A673 (cell line): ENCODE measurements at regions of chr6 and their contacts with region 1.

Region 1: DNA sequence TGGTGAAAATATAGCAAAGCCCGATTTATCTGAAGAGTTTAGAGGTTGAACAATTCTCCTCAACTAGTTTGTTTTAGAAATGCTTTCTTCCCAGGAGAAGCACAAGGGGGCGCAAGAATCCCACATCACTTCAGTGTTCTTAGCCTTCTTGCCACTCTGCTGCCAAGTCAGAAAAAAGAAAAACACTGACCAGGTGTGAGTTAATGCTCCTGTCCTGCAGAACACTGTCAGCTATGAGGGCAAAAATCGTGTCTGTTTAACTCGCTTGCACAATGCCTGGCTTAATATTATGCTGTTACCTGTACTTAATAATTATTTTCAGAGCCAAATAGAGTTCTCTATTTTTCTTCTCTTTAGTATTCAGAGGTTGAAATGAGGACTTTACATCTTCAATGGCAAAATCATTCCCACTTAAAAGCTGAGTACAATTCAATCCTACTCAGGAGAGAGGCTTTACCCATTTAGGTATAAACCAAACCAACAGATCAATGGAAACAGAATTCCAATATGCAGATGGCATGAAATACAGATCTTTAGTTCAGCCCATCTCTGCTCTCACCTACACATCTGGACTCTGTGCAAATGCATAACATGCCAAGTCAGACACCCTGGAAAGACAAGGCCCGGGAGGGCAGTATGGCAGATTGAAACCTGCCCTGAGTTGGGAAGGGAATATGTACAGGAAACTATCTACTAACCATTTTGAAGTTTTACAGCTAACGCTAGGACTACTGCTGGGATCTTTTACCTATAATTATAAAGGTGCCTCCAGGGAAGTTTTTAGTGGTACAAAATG is 71.4 kb upstream of the TULP1 start:
- DNase-seq: peak; percentile 79
- H3K4me3 ChIP-seq: no peak overlapping the region
- H3K27ac ChIP-seq: no peak overlapping the region
- H3K4me1 ChIP-seq: no peaks in the 10 kb centered on the region
- H3K27me3 ChIP-seq: no peaks in the 10 kb centered on the region
- CTCF ChIP-seq: peak; percentile 85

Region 2: GRCh38 chr6:35624341-35625070 is 40.4 kb after region 1 on chr6:
- CTCF ChIA-PET with region 1: interaction called, 3 read pairs
- POLR2A ChIA-PET with region 1: no interaction called
- intact Hi-C with region 1: loop called (anchors 2 kb)
- DNase-seq: peak; percentile 47
- H3K4me3 ChIP-seq: no peak overlapping the region
- H3K27ac ChIP-seq: no peak overlapping the region
- H3K4me1 ChIP-seq: peaks cover 2% of the 10 kb centered on the region
- H3K27me3 ChIP-seq: no peaks in the 10 kb centered on the region
- CTCF ChIP-seq: peak; percentile 57

Region 3: GRCh38 chr6:35688581-35689322 is 104.7 kb after region 1 on chr6 and contains the start of gene FKBP5:
- CTCF ChIA-PET with region 1: no interaction called
- POLR2A ChIA-PET with region 1: no interaction called
- intact Hi-C with region 1: loop called (anchors 2 kb)
- DNase-seq: peak; percentile 93
- H3K4me3 ChIP-seq: peak within 1 kb of the TSS; percentile 67
- H3K27ac ChIP-seq: no peak within 1 kb of the TSS
- H3K4me1 ChIP-seq: peaks cover 9% of the 10 kb centered on the region
- H3K27me3 ChIP-seq: no peaks in the 10 kb centered on the region
- CTCF ChIP-seq: no peak
- total RNA-seq, gene FKBP5: 20.4 and 26.2 TPM in 2 replicates

Region 4: DNA sequence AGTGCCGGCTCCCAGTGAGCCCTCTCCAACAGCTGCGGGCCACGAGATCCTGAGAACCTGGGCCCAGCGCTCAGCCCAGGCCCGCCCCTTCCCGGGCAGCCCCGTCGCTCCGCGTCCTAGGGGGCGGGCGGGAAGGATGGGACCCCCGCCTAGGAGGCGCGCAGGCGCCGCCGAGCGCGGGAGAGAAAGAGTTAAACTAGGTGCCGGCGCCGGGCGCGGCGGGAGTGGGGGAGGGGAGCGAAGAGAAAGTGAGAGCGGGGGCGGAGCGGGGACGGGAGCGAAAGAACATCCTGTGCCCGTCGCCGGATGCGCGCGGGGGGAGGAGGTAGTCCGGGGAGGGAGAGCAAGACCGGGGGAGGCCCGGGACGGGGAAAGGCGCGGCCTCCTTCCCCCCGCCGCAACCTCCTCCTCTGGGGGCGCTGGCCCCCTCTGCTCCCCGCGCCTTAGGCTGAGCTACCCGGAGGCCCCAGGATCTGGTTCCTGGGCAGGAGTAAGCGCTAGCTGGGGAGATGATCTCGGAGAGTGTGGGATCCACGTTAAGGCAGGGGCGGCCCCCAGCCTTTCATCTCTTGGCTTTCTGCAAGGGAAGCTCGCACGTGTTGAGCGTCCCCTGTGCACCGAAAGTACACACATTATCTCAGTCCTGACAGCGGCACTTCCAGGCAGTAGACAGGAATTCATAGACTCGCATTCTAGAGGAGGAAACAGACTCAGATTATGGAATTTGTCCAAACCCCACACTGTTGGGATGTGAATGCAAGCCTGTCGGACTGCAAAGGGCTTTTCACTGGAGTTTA is 147.8 kb after region 1 on chr6:
- CTCF ChIA-PET with region 1: interaction called, 15 read pairs
- POLR2A ChIA-PET with region 1: no interaction called
- intact Hi-C with region 1: loop called (anchors 1 kb)
- DNase-seq: peak; percentile 86
- H3K4me3 ChIP-seq: peak overlapping the region; percentile 90
- H3K27ac ChIP-seq: peak overlapping the region; percentile 81
- H3K4me1 ChIP-seq: peaks cover 29% of the 10 kb centered on the region
- H3K27me3 ChIP-seq: no peaks in the 10 kb centered on the region
- CTCF ChIP-seq: 0 out of 2 replicates have a peak, but pooled peaks have one; percentile 14